ENCODE measurements at regions of chr5 and their contacts with region 1.

Region 1: DNA sequence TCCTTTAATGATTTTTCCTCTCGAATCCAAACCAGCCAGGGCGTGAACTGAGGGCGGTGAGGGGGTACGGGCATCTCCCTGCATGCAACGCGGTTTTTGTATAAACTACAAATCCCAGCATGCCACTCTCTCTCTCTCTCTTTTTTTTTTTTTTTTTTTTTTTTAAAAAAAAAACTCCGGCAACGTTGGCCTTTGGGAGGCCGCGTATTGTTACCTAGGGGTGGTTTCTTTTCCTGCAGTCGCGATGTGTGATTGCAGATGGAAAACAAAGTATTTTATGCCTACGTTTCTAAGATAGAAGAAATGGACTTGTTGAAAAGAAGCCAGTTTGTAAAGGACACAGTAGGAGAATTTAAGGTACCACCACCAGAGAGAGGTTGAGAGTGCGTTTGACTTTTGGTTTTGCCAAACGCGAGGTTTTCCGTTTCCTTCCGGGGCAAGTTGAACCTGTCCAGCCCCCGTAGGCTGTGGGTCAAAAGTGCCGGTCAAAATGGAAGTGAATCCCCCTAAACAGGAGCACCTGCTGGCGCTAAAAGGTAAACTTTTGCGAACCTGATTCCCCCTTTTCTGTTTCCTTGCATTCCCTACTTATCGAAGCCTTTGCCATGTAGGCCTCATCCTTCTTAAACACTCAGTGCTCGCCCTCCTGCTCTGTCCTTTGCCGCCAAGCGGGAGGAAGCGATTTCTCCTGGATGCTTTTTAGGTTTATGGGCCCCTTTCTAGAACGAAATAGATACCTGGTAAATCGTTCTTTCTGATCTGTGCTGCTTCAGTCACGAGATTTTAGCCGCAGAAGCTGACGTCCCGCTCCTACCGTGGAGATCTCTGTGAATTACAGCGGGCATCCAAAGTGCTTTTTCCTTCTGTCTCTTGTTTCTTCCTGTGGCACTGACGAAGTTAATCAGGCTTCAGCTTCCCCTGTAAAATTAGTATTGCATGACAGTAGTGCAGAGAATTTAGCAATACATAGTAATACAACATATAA is at the starts of genes SHLD3 and TRAPPC13:
- DNase-seq: peak; percentile 72 to 95 (median 86)

Region 2: GRCh38 chr5:65562731-65563701 is 61.8 kb before region 1 on chr5 and contains the starts of genes CENPK and PPWD1:
- intact Hi-C with region 1: loop called (anchors 10 kb)
- DNase-seq: peak; percentile 90 to 98 (median 95)

Region 3: GRCh38 chr5:65577141-65577540 is 47.7 kb before region 1 on chr5:
- intact Hi-C with region 1: no loop called
- DNase-seq: no peak

Region 4: DNA sequence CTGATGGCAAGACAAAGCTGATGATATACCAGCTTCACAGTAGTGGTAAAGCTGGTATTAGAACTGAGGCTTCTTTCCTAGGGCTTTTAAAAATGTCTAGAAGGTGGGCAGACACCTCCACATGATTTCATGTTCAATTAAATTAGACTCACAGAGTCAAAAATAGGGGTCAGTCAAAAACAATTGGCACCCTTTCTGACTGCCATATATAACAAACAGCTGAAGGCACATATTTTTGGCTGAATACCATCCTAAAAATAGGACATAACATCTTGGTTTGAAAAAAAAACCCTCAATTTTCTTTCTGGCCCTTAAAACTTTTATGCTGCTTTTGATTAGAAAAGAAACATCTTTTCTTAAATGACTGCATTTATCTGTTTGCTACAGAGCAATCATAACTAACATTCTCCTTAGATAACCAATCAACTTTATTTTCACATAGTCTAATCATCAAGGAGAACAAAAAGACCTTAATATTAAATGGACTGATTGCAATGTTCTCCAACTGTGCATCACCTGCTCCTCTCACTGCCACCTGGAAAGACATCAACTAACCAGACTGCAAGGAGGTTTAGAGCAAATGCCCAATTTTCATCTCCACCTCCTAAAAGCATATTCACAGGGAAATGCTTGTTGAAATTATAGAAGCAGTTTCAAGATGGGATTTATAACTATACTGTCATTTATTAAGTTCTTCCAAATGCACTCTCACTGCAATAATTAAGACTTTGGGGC is 93.9 kb after region 1 on chr5:
- intact Hi-C with region 1: loop called (anchors 10 kb)
- DNase-seq: no peak

Region 5: DNA sequence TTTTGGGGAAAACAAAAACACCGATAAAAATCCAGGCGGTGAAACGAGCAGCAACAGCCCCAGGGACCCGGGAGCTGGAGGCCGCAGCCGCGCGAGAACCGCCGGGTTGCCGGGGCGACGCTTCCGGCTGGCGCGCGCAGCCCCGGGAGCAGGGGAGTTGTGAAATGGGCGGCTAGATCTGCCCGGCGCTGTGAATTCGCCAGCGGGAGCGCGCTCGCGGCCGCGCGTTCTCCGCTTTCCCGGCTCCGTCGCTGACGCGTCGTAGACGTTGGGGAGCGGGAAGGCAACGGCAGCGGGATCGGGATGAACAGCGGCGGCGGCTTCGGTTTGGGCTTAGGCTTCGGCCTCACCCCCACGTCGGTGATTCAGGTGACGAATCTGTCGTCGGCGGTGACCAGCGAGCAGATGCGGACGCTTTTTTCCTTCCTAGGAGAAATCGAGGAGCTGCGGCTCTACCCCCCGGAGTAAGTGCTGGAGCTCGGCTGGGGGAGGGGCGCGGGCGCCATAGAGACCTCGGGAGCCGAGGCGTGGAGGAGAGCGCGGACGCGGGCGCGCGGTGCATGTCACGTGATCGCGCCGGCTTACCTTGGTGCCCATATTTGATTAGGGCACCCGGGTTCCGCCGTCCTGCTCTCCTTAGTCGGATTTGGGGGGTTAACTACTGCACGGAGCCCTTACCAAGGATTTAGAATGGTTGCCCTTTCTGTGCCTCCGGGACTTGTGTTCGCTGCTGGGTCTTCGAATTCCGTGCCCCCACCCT is 519.4 kb after region 1 on chr5 and contains the start of gene SREK1:
- intact Hi-C with region 1: loop called (anchors 10 kb)
- DNase-seq: peak; percentile 85 to 97 (median 93)